CD8-positive, alpha-beta memory T cell (primary cell): ENCODE measurements at regions of chr1 and their contacts with region 1.

Region 1: DNA sequence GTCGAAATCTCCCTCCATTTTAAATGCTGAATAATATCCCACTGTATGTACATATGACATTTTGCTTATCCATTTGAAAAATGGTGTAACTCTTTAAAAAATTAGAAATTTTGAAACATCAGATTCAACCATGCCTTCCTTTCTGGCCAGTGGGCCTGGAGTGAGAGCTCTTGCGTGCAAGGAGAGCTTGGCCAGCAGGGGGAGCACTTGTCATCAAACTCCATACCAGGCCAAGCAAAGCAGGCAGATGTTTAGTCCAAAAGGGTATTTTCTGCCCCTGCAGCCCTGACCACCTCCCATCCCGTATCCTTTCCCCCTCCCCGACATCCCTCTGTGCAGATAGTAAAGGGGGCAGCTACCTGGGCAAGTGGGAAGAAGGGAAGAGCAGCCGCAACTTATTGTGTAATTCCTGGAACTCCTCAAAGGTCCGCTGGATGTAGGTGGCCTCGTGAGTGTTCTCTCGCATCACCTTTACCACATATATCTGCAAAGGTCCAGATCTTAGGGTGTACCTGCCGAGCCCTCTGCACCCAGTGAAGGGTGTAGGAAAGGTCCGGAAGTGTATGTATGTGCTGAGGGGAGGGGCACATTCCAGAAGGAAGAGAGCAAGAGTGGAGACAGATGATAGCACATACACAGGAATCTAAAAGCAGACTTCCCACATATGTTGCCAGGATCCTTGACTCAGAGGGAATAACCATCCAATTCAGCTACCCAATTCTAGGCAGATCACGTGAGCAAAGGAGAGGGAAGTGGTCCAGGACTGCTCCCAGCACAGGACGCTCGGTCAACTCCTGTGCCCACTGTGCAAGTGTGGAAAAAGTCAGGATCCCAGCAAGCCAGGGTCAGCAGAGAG is 19.9 kb upstream of the PPP1R15B start:
- DNase-seq: peak; percentile 62 to 82 (median 68)
- H3K4me3 ChIP-seq: no peak overlapping the region
- H3K4me3 Mint-ChIP-seq: no peak overlapping the region
- H3K27ac ChIP-seq: no peak overlapping the region
- H3K27ac Mint-ChIP-seq: peak overlapping the region in 5 of 8 donors; percentile 17 to 71 (median 51)
- H3K4me1 ChIP-seq: no peaks in the 10 kb centered on the region
- H3K4me1 Mint-ChIP-seq: peaks cover 0 to 7% (median 4%) of the 10 kb centered on the region in 3 donors
- H3K27me3 ChIP-seq: no peaks in the 10 kb centered on the region
- H3K27me3 Mint-ChIP-seq: no peaks in the 10 kb centered on the region

Region 2: GRCh38 chr1:204036880-204037655 is 394.5 kb before region 1 on chr1:
- CTCF ChIA-PET with region 1: no interaction called
- POLR2A ChIA-PET with region 1: no interaction called
- DNase-seq: no peak
- H3K4me3 ChIP-seq: no peak overlapping the region
- H3K4me3 Mint-ChIP-seq: no peak overlapping the region
- H3K27ac ChIP-seq: no peak overlapping the region
- H3K27ac Mint-ChIP-seq: no peak overlapping the region
- H3K4me1 ChIP-seq: no peaks in the 10 kb centered on the region
- H3K4me1 Mint-ChIP-seq: no peaks in the 10 kb centered on the region
- H3K27me3 ChIP-seq: no peaks in the 10 kb centered on the region
- H3K27me3 Mint-ChIP-seq: peaks cover 7 to 12% of the 10 kb centered on the region in 2 donors

Region 3: GRCh38 chr1:204065174-204065985 is 366.2 kb before region 1 on chr1:
- CTCF ChIA-PET with region 1: no interaction called
- POLR2A ChIA-PET with region 1: no interaction called
- DNase-seq: no peak
- H3K4me3 ChIP-seq: no peak overlapping the region
- H3K4me3 Mint-ChIP-seq: peak overlapping the region in 2 of 7 donors; percentile 11 to 13
- H3K27ac ChIP-seq: no peak overlapping the region
- H3K27ac Mint-ChIP-seq: peak overlapping the region in 3 of 8 donors; percentile 6 to 72 (median 37)
- H3K4me1 ChIP-seq: peaks cover 6% of the 10 kb centered on the region
- H3K4me1 Mint-ChIP-seq: peaks cover 8 to 17% (median 14%) of the 10 kb centered on the region in 3 donors
- H3K27me3 ChIP-seq: no peaks in the 10 kb centered on the region
- H3K27me3 Mint-ChIP-seq: peaks cover 5 to 27% of the 10 kb centered on the region in 2 donors

Region 4: DNA sequence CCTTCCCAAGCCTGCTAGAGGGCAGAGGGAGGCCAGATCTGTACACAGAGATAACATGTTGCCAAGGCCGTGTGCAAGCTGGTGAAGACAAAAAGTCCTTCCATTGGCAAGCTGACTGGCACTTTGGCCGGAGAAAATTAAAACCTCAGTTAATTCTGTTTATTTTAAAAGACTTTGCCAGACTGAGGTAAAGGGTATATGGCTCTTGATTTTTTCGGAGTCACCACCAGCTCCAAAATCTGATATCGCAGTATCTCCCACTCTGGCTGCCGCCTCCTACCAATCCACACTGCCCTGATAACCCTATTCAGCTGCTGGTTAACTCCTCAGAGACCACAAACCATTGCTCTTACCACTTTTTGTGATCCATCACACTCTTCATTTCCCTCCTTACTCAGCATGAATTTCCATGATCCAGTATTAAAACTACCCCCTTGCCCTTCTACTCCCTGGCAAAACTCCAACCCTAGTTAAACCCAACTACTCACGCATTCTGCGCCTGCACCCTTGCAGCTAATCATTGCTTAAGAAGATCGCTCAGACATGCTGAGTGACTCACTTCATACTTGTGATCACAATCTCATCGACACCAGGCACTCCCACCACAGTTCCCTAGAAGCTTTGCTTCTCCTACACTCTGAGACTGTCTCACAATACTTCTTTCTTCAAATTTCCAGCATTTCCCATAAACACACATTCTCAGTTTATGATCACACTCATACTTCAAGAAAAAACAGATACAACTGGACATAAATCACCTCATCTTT is 14.1 kb before region 1 on chr1:
- CTCF ChIA-PET with region 1: interaction called, 10 read pairs
- POLR2A ChIA-PET with region 1: no interaction called
- DNase-seq: no peak
- H3K4me3 ChIP-seq: no peak overlapping the region
- H3K4me3 Mint-ChIP-seq: no peak overlapping the region
- H3K27ac ChIP-seq: peak overlapping the region; percentile 25
- H3K27ac Mint-ChIP-seq: peak overlapping the region in 5 of 8 donors; percentile 3 to 90 (median 43)
- H3K4me1 ChIP-seq: peaks cover 1% of the 10 kb centered on the region
- H3K4me1 Mint-ChIP-seq: peaks cover 12 to 31% (median 25%) of the 10 kb centered on the region in 3 donors
- H3K27me3 ChIP-seq: no peaks in the 10 kb centered on the region
- H3K27me3 Mint-ChIP-seq: no peaks in the 10 kb centered on the region

Region 5: GRCh38 chr1:204465546-204466415 is 34.2 kb after region 1 on chr1:
- CTCF ChIA-PET with region 1: no interaction called
- POLR2A ChIA-PET with region 1: no interaction called
- DNase-seq: no peak
- H3K4me3 ChIP-seq: no peak overlapping the region
- H3K4me3 Mint-ChIP-seq: no peak overlapping the region
- H3K27ac ChIP-seq: no peak overlapping the region
- H3K27ac Mint-ChIP-seq: peak overlapping the region in 5 of 8 donors; percentile 25 to 63 (median 52)
- H3K4me1 ChIP-seq: peaks cover 43% of the 10 kb centered on the region
- H3K4me1 Mint-ChIP-seq: peaks cover 40 to 47% (median 46%) of the 10 kb centered on the region in 3 donors
- H3K27me3 ChIP-seq: no peaks in the 10 kb centered on the region
- H3K27me3 Mint-ChIP-seq: no peaks in the 10 kb centered on the region

Region 6: DNA sequence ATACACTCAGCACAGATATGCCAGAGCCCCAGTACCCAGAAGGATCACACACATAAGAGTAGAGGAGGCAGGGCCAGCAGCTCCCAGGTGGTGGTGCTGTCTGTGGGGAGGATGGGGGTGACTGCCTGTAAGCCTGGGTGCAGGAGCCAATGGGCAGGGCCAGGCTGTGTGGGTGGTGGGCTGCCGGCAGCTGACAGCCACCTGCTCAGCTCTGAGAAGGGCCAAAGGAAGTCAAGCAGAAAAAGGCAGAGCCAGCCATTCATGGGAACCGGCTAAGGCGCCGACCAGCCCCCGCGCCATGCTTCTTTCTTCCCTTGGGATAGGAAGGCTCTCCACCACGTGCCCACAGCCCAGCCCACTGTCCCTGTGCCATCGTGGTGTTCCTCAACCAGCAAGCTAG is 49.0 kb after region 1 on chr1:
- CTCF ChIA-PET with region 1: interaction called, 16 read pairs
- POLR2A ChIA-PET with region 1: no interaction called
- DNase-seq: no peak
- H3K4me3 ChIP-seq: no peak overlapping the region
- H3K4me3 Mint-ChIP-seq: peak overlapping the region in 3 of 7 donors; percentile 22 to 54 (median 24)
- H3K27ac ChIP-seq: no peak overlapping the region
- H3K27ac Mint-ChIP-seq: peak overlapping the region in 5 of 8 donors; percentile 29 to 63 (median 58)
- H3K4me1 ChIP-seq: peaks cover 34% of the 10 kb centered on the region
- H3K4me1 Mint-ChIP-seq: peaks cover 56 to 85% (median 84%) of the 10 kb centered on the region in 3 donors
- H3K27me3 ChIP-seq: no peaks in the 10 kb centered on the region
- H3K27me3 Mint-ChIP-seq: no peaks in the 10 kb centered on the region

Region 7: DNA sequence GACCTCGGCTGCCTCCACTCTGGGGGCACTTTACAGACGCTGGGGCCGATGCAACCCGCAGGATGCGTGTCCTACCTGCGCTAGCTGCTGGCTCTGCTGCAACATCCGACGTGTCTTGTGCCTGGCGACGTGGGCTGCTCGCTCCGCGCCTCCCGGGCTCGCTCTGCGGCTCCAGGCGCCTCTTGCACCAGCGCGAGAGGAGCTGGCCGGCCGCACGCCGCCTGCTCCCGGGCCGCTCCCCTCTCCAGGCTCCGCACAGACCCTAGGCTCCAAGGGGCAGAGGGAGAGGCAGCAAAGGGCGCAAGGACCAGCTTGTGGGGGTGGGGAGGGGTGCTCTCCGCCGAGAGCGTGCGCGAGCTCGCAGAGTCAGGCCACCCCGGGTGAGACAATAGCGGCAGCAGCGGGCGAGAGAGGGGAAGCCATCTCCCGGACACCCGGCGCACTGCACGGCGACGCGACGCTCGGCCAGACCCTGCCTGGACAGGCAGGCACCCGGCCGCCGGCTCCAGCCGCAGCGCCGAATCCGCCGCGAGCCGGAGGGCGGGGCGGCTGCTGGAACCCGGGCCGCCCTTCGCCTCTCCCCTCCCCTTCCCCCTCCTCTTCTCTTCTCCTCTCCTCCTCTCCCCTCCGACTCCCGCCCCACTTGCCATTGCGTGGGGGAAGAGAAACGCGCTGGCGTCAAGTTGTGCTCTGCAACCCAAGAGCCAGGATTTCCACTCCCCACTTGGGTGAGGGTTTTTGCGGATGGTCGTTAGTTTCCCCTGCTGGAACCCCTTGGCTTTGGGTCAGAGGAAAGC is 62.9 kb after region 1 on chr1 and contains the start of gene PIK3C2B:
- CTCF ChIA-PET with region 1: interaction called, 53 read pairs
- POLR2A ChIA-PET with region 1: interaction called, 3 read pairs
- DNase-seq: peak; percentile 54 to 78 (median 69)
- H3K4me3 ChIP-seq: peak within 1 kb of the TSS; percentile 58
- H3K4me3 Mint-ChIP-seq: peak within 1 kb of the TSS; percentile 85 to 97 (median 94)
- H3K27ac ChIP-seq: peak within 1 kb of the TSS; percentile 77
- H3K27ac Mint-ChIP-seq: peak within 1 kb of the TSS; percentile 85 to 99 (median 96)
- H3K4me1 ChIP-seq: peaks cover 30% of the 10 kb centered on the region
- H3K4me1 Mint-ChIP-seq: peaks cover 40 to 57% (median 51%) of the 10 kb centered on the region in 3 donors
- H3K27me3 ChIP-seq: no peaks in the 10 kb centered on the region
- H3K27me3 Mint-ChIP-seq: peaks cover 0 to 2% of the 10 kb centered on the region in 2 donors
- total RNA-seq, gene PIK3C2B: 19.4 to 19.6 TPM

Region 8: GRCh38 chr1:204714861-204715511 is 283.4 kb after region 1 on chr1:
- CTCF ChIA-PET with region 1: no interaction called
- POLR2A ChIA-PET with region 1: no interaction called
- DNase-seq: no peak
- H3K4me3 ChIP-seq: no peak overlapping the region
- H3K4me3 Mint-ChIP-seq: no peak overlapping the region
- H3K27ac ChIP-seq: no peak overlapping the region
- H3K27ac Mint-ChIP-seq: no peak overlapping the region
- H3K4me1 ChIP-seq: no peaks in the 10 kb centered on the region
- H3K4me1 Mint-ChIP-seq: no peaks in the 10 kb centered on the region
- H3K27me3 ChIP-seq: no peaks in the 10 kb centered on the region
- H3K27me3 Mint-ChIP-seq: peaks cover 13 to 43% of the 10 kb centered on the region in 2 donors